OCI-LY7 (cell line): ENCODE measurements at regions of chr13 and their contacts with region 1.

Region 1: GRCh38 chr13:113064534-113065405 is 40.8 kb upstream of the F7 start:
- DNase-seq: no peak
- H3K4me3 ChIP-seq: no peak overlapping the region
- H3K27ac ChIP-seq: no peak overlapping the region
- H3K4me1 ChIP-seq: no peaks in the 10 kb centered on the region
- CTCF ChIP-seq: no peak

Region 2: DNA sequence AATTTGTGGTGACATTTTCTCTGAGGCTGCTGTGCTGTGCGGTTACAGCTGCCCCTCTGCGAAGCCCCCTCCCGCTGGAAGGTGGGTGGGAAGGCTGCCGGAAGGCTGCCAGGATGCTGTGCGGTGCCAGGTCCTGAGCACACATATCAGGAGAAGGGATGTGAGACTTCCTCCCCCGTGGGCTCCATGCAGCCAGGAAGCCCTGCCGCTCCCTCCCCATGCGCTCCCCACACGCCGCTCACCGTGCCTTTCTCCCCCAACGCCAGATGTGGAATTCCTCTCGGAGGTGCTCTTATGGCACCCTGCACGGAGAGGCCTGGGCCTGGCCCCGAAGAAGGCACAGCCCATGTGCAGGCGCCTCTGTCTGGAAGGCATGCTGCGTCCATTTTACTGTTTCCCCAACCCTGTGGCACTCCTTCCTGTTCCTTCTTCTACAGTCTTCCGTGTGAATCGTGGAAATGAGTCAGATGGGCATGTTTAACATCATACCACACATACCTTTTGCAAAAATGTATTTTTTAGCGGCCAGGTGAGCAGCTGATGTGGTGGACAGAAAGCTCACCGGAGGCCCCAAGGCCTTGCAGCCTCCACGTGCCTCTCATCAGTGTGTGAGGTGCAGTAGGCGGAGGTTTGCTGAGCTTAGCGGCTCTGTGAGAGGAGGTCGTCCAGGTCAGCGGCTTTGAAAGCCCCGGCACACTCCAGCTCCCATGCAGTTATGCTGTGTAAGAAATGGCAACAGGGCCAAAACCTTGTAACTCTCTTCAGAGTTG is 286.9 kb before region 1 on chr13:
- CTCF ChIA-PET with region 1: interaction called, 12 read pairs
- POLR2A ChIA-PET with region 1: no interaction called
- intact Hi-C with region 1: no loop called
- DNase-seq: no peak
- H3K4me3 ChIP-seq: no peak overlapping the region
- H3K27ac ChIP-seq: no peak overlapping the region
- H3K4me1 ChIP-seq: no peaks in the 10 kb centered on the region
- CTCF ChIP-seq: no peak